Dorsolateral prefrontal cortex (tissue), 120 donors: ENCODE measurements at regions of chr1 and their contacts with region 1.

Region 1: GRCh38 chr1:93345633-93346420 is at the start of gene DR1:
- DNase-seq: peak; percentile 84 to 94 (median 92)
- H3K4me3 ChIP-seq: peak within 1 kb of the TSS; percentile 64 to 100 (median 91)
- H3K27ac ChIP-seq: peak within 1 kb of the TSS; percentile 70 to 98 (median 94)
- H3K27me3 ChIP-seq: no peaks in the 10 kb centered on the region
- CTCF ChIP-seq: peak in 19 of 56 donors; percentile 8 to 49 (median 26)
- total RNA-seq, gene DR1: 27.3 to 45.6 (median 35.4) TPM

Region 2: DNA sequence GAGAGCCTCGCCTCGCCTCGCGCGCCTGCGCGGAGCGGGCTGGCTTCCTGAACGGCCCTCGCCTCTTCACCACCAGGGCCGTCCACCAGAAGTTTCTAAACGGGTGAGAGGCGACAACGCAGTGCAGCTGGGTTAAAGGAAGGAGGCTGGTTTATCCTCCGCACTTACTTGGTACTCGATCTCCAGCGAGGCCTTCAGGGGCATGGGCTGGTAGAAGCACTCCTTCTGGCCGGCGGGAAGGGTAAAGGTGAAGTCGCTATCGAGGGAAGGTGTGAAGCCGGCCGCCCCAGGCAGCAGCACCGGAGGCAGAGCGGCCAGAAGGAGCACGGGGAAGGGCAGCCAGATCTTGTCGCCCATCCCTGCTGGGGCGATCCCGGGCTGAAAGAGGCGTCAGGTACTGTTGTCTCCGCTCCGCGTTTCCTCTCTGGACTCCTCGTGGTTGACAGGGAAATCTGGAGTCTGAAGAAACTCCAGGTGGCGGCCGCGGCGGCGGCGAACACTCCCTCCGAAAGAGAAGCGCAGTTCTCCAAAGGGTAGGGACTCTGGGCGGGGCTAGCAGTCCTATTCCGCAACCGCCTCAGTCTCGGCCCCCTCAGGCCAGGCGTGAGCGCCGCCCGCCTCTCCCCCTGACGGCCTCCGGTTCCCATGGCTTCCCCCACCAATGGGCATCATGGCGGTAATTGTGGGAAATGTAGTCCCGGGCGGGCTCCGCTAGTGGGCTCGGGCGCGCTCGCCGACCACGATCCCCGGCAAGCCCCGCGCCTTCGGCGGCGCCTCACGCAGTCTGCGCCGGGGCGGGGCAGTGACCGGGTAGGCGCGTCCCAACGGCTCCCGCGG is 165.7 kb before region 1 on chr1 and contains the start of gene TMED5:
- intact Hi-C with region 1: loop called in 1 of 2 experiments (anchors 5 kb)
- DNase-seq: peak; percentile 87 to 99 (median 96)
- H3K4me3 ChIP-seq: peak within 1 kb of the TSS; percentile 50 to 99 (median 90)
- H3K27ac ChIP-seq: peak within 1 kb of the TSS; percentile 73 to 100 (median 97)
- H3K27me3 ChIP-seq: no peaks in the 10 kb centered on the region
- CTCF ChIP-seq: peak in 49 of 56 donors; percentile 4 to 68 (median 41)
- total RNA-seq, gene TMED5: 21.5 to 56.2 (median 36.2) TPM